ENCODE measurements at regions of chr17 and their contacts with region 1.

Region 1: DNA sequence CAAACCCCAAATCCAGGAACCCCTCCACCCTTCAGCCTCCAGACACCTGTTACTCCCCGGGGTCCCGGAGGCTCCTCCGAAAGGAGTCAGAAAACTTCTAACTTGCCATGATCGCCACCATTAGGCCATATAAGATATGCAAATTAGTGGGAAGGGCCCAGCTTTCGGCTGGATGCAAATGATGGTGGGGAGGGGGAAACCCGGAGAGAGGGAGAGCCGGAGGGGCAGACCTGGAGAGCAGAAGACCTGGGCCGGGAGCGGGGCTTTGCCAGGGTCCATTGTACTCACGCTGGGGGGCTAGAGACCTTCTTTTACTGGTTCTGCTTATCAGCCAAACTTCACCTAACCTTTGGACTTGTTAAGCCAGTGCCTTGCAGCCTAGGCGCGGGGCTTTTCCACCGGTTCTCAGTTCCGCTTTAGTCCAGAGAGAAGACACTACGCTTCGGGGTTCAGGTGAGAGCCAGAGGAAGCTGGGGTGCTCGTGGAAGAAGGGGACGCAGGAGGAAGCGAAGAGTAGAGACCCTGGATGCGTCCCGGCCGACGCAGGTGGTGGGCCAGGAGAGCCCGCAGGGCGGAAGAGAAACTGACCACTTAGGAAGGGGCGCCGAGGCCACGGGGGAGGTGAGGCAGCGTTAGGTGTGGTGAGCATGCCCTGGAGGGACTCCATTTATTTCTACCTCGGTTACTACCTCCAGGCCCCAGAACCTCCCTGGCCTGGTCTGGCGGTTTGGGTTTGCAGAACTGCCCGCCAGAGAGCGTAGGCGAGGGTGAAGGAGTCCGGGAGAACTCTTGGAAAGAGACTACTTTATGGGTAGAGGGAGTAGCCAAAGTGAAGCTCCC is at the start of gene HNF1B:
- DNase-seq: peak; percentile 63
- ATAC-seq: peak; percentile 37
- H3K4me3 ChIP-seq: peak within 1 kb of the TSS; percentile 77 to 89 (median 80)
- H3K27ac ChIP-seq: peak within 1 kb of the TSS; percentile 94
- H3K4me1 ChIP-seq: peaks cover 41% of the 10 kb centered on the region
- H3K27me3 ChIP-seq: no peaks in the 10 kb centered on the region; a peak in 1 of 5 replicates
- CTCF ChIP-seq: no peak; the same call in 1 of the 2 replicates
- EP300 ChIP-seq: no peak
- POLR2A ChIP-seq: peak; percentile 58 to 63; a peak in 3 of 4 replicates
- RAD21 ChIP-seq: no peak
- total RNA-seq, gene HNF1B: 1.8 and 1.9 TPM in 2 replicates

Region 2: GRCh38 chr17:37551788-37552187 is 193.4 kb before region 1 on chr17:
- CTCF ChIA-PET with region 1: no interaction called
- POLR2A ChIA-PET with region 1: no interaction called
- in situ Hi-C with region 1: no loop called
- intact Hi-C with region 1: no loop called
- DNase-seq: no peak
- ATAC-seq: no peak
- H3K4me3 ChIP-seq: no peak overlapping the region
- H3K27ac ChIP-seq: no peak overlapping the region
- H3K4me1 ChIP-seq: no peaks in the 10 kb centered on the region
- H3K27me3 ChIP-seq: no peaks in the 10 kb centered on the region
- CTCF ChIP-seq: no peak
- EP300 ChIP-seq: no peak
- POLR2A ChIP-seq: no peak
- RAD21 ChIP-seq: no peak

Region 3: GRCh38 chr17:37650419-37651003 is 94.7 kb before region 1 on chr17:
- CTCF ChIA-PET with region 1: no interaction called
- POLR2A ChIA-PET with region 1: interaction called, 3 read pairs
- in situ Hi-C with region 1: loop called (anchors 10 kb)
- intact Hi-C with region 1: loop called (anchors 2 kb)
- DNase-seq: peak; percentile 77
- ATAC-seq: peak; percentile 74
- H3K4me3 ChIP-seq: no peak overlapping the region
- H3K27ac ChIP-seq: no peak overlapping the region
- H3K4me1 ChIP-seq: peaks cover 36% of the 10 kb centered on the region
- H3K27me3 ChIP-seq: no peaks in the 10 kb centered on the region; a peak in 1 of 5 replicates
- CTCF ChIP-seq: peak; percentile 81
- EP300 ChIP-seq: no peak
- POLR2A ChIP-seq: no peak
- RAD21 ChIP-seq: peak; percentile 86

Region 4: GRCh38 chr17:37683454-37683984 is 61.7 kb before region 1 on chr17:
- CTCF ChIA-PET with region 1: no interaction called
- POLR2A ChIA-PET with region 1: interaction called, 9 read pairs
- in situ Hi-C with region 1: no loop called
- intact Hi-C with region 1: loop called (anchors 10 kb)
- DNase-seq: peak; percentile 97
- ATAC-seq: peak; percentile 74
- H3K4me3 ChIP-seq: no peak overlapping the region
- H3K27ac ChIP-seq: peak overlapping the region; percentile 76
- H3K4me1 ChIP-seq: peaks cover 65% of the 10 kb centered on the region
- H3K27me3 ChIP-seq: no peaks in the 10 kb centered on the region
- CTCF ChIP-seq: no peak
- EP300 ChIP-seq: peak; percentile 24 to 82; a peak in 3 of 4 replicates
- POLR2A ChIP-seq: no peak
- RAD21 ChIP-seq: 0 out of 2 replicates have a peak, but pooled peaks have one; percentile 18

Region 5: GRCh38 chr17:37710344-37710886 is 34.8 kb before region 1 on chr17:
- CTCF ChIA-PET with region 1: no interaction called
- POLR2A ChIA-PET with region 1: interaction called, 79 read pairs
- in situ Hi-C with region 1: loop called (anchors 5 kb)
- intact Hi-C with region 1: no loop called
- DNase-seq: peak; percentile 99
- ATAC-seq: peak; percentile 54
- H3K4me3 ChIP-seq: no peak overlapping the region
- H3K27ac ChIP-seq: peak overlapping the region; percentile 99
- H3K4me1 ChIP-seq: peaks cover 95% of the 10 kb centered on the region
- H3K27me3 ChIP-seq: no peaks in the 10 kb centered on the region
- CTCF ChIP-seq: no peak
- EP300 ChIP-seq: peak; percentile 34 to 71; a peak in 3 of 4 replicates
- POLR2A ChIP-seq: no peak; a peak in 1 of 4 replicates
- RAD21 ChIP-seq: no peak

Region 6: GRCh38 chr17:37770631-37771518 is 25.7 kb after region 1 on chr17:
- CTCF ChIA-PET with region 1: no interaction called
- POLR2A ChIA-PET with region 1: interaction called, 12 read pairs
- in situ Hi-C with region 1: no loop called
- intact Hi-C with region 1: no loop called
- DNase-seq: peak; percentile 61
- ATAC-seq: peak; percentile 81
- H3K4me3 ChIP-seq: no peak overlapping the region
- H3K27ac ChIP-seq: no peak overlapping the region
- H3K4me1 ChIP-seq: peaks cover 54% of the 10 kb centered on the region
- H3K27me3 ChIP-seq: peaks cover 0 to 4% of the 10 kb centered on the region in 2 experiments; a peak in 3 of 5 replicates
- CTCF ChIP-seq: peak; percentile 95
- EP300 ChIP-seq: no peak
- POLR2A ChIP-seq: no peak
- RAD21 ChIP-seq: peak; percentile 86